Dorsolateral prefrontal cortex (tissue), 120 donors: ENCODE measurements at regions of chr19 and their contacts with region 1.

Region 1: GRCh38 chr19:55674841-55675660 is at the start of gene EPN1:
- DNase-seq: peak; percentile 91 to 98 (median 96)
- H3K4me3 ChIP-seq: peak within 1 kb of the TSS; percentile 62 to 99 (median 84)
- H3K27ac ChIP-seq: peak within 1 kb of the TSS in 56 of 59 donors; percentile 31 to 96 (median 84)
- H3K27me3 ChIP-seq: no peaks in the 10 kb centered on the region
- CTCF ChIP-seq: peak in 28 of 56 donors; percentile 6 to 57 (median 22)
- total RNA-seq, gene EPN1: 99.1 to 200 (median 154) TPM

Region 2: DNA sequence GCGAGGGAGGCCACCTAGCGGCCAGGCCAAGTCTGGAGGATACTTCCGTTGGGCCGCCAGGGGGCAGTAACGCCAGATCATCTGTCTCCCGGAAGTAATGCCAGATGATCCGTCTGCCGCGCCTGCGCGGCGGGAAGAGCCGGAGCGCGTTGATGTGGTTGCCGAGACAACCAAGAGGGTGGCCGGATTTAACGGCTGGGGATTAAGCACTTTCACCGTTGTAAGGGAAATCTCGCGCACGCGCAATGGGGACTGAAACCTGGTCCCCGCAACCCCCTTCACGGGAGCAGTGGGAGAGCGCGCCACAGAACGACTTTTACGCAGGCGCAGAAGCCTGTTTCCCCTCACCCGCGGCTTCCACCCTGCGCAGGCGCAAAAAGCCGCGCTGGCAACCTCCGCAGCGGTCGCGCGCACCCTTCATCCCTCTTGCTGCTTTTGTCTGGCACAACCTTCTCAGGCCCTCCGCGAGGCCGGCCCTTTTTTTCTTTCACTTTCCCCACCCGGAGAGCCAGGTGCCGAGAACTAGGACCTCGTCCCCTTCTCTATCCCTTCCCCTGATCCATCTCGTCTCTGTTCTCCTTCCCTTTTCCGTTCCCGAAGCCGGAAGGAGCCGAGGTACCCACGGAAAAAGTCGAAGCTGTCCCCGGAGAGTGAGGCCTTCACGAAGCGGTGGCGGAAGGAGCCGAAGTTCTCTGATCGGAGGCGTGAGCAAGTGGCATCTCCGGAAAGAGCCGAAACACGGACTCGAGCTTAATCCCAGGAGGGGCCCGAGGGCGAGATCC is 21.1 kb before region 1 on chr19:
- intact Hi-C with region 1: loop called (anchors 2 kb)
- DNase-seq: peak; percentile 96 to 99 (median 98)
- H3K4me3 ChIP-seq: peak overlapping the region; percentile 55 to 100 (median 95)
- H3K27ac ChIP-seq: peak overlapping the region; percentile 95 to 100 (median 99)
- H3K27me3 ChIP-seq: no peaks in the 10 kb centered on the region
- CTCF ChIP-seq: peak; percentile 93 to 100 (median 99)

Region 3: DNA sequence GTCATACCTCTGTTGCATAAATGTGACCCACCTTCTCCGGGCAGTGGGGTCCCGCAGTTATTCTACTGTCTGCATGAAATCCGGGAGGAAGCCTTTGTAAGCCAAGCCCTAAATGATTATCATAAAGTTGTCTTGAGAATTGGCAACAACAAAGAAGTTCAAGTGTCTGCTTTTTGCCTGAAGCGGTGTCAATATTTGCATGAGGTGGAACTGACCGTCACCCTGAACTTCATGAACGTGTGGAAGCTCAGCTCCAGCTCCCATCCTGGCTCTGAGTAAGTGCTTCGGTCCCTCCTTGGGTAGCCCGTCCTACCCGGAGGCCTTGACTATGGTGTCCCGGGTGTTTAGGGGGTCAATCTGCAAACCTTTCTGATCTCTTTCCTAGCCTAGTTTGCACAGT is 280.8 kb after region 1 on chr19:
- intact Hi-C with region 1: no loop called
- DNase-seq: no peak
- H3K4me3 ChIP-seq: no peak overlapping the region
- H3K27ac ChIP-seq: no peak overlapping the region
- H3K27me3 ChIP-seq: peaks cover 0 to 8% (median 0%) of the 10 kb centered on the region in 45 donors
- CTCF ChIP-seq: no peak